ENCODE measurements at regions of chr7 and their contacts with region 1.

Region 1: DNA sequence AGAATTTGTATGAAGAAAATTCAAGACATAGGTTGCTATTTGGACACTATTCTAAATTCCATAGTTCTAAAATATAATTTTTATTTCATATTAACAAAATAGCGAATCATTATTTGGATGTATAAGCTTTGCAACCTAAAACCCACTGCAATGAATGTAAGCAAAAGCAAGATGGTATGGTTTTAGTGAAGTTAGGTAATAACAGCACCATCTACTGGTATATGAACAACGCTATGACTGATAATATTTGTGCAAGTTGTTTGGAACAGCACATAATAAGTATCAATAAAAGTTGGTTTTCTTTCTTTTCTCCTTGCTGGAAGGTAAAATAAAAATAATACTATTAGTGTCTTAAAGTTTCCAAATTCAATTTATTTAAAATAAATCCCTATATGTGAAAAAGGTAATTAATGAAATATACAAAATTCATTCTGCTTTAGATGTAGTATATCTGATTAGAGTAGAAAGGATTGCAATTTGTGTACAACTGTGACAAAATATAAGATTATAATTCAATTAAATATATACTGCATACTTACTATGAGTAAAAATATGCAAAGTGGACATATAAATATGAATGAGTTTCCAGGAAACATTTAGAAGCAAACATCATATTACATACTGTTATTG is 79.0 kb upstream of the LSM8 start:
- DNase-seq: no peak
- H3K4me3 Mint-ChIP-seq: no peak overlapping the region
- H3K27ac Mint-ChIP-seq: no peak overlapping the region
- H3K4me1 Mint-ChIP-seq: peaks cover 2% of the 10 kb centered on the region
- H3K27me3 Mint-ChIP-seq: no peaks in the 10 kb centered on the region

Region 2: GRCh38 chr7:117750612-117751563 is 354.0 kb before region 1 on chr7:
- intact Hi-C with region 1: loop called (anchors 2 kb)
- DNase-seq: no peak
- H3K4me3 Mint-ChIP-seq: no peak overlapping the region
- H3K27ac Mint-ChIP-seq: no peak overlapping the region
- H3K4me1 Mint-ChIP-seq: no peaks in the 10 kb centered on the region
- H3K27me3 Mint-ChIP-seq: no peaks in the 10 kb centered on the region

Region 3: DNA sequence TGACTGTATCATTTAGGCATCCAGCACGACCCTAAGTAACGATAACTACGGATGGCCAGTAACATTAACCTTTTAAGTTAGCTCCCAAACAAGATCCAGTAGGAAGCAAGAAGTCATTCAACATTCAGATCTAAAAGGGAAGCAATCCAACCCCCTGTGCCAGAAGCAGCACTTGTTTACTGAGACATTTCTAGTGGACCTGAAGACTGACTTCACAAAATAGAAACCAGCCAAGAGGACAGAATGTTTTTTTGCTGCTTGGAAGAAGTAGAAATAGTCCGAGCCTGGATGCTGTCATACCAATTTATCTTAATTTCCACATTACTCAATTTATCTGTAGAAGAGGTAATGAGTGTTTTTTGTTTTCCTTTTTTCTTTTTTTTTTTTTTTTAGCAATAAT is 143.7 kb before region 1 on chr7:
- intact Hi-C with region 1: no loop called
- DNase-seq: no peak
- H3K4me3 Mint-ChIP-seq: no peak overlapping the region
- H3K27ac Mint-ChIP-seq: no peak overlapping the region
- H3K4me1 Mint-ChIP-seq: no peaks in the 10 kb centered on the region
- H3K27me3 Mint-ChIP-seq: no peaks in the 10 kb centered on the region

Region 4: GRCh38 chr7:117993377-117994003 is 111.4 kb before region 1 on chr7:
- intact Hi-C with region 1: loop called (anchors 10 kb)
- DNase-seq: no peak
- H3K4me3 Mint-ChIP-seq: no peak overlapping the region
- H3K27ac Mint-ChIP-seq: no peak overlapping the region
- H3K4me1 Mint-ChIP-seq: no peaks in the 10 kb centered on the region
- H3K27me3 Mint-ChIP-seq: no peaks in the 10 kb centered on the region

Region 5: GRCh38 chr7:118045629-118046028 is 59.3 kb before region 1 on chr7:
- intact Hi-C with region 1: no loop called
- DNase-seq: no peak
- H3K4me3 Mint-ChIP-seq: no peak overlapping the region
- H3K27ac Mint-ChIP-seq: no peak overlapping the region
- H3K4me1 Mint-ChIP-seq: no peaks in the 10 kb centered on the region
- H3K27me3 Mint-ChIP-seq: no peaks in the 10 kb centered on the region

Region 6: GRCh38 chr7:118175740-118176139 is 70.8 kb after region 1 on chr7:
- intact Hi-C with region 1: no loop called
- DNase-seq: no peak
- H3K4me3 Mint-ChIP-seq: no peak overlapping the region
- H3K27ac Mint-ChIP-seq: no peak overlapping the region
- H3K4me1 Mint-ChIP-seq: no peaks in the 10 kb centered on the region
- H3K27me3 Mint-ChIP-seq: peaks cover 7% of the 10 kb centered on the region